A549 (cell line): ENCODE measurements at regions of chr17 and their contacts with region 1.

Region 1: GRCh38 chr17:42422958-42423712 is at the start of gene CAVIN1:
- DNase-seq: peak; percentile 97 to 99
- ATAC-seq: peak; percentile 71 to 86
- H3K4me3 ChIP-seq: peak within 1 kb of the TSS; percentile 93
- H3K27ac ChIP-seq: peak within 1 kb of the TSS; percentile 93 to 95
- H3K4me1 ChIP-seq: peaks cover 45% of the 10 kb centered on the region
- CTCF ChIP-seq: no peak
- EP300 ChIP-seq: no peak
- POLR2A ChIP-seq: peak; percentile 99
- RAD21 ChIP-seq: peak in 1 of 2 experiments; percentile 18; a peak in 1 of 5 replicates
- polyA plus RNA-seq, gene CAVIN1: 91.4 and 101 TPM in 2 replicates

Region 2: DNA sequence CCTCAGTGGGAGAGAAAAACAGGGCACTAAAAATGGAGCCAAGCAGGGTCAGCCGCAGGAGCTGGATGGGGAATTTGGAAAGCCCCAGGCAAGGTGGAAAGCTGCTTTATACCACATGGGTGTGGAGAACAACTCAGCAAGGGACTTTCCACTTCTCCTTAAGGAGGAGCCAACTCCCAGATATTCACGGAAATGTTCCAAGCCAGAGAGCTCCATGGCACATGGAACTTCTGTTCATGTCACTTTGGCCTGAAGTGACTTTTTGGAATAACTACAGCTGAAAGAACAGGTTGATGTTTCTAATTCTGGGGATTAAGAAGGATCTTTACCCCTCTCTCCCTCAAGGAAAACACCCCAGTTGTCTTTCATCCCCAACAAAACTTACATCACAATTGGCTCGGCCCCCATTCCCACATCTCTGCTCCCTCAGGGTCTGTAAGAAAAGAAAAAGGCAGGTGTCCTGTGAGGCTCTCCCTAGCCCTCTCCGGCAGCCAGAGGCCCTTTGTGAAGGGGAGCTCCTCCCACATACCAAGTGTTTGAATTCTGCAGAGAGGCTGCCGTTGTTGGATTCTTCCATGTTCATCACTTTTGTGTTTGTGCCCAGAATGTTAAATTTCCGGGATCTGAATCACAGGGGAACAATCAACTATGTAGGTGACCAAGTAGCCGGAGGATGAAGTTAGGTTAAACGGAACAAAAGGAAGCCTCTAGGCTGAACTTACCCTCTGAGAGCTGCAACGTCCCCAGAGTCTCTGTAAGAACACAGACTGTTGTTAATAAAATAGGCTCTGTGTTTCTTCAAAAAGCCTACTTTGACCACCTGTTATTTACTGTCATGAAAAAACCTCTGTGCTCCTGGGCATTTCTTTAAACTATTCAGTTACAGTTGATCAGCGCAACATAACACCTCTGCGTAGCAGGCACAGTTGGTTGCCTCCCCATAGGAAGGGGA is 93.8 kb before region 1 on chr17:
- CTCF ChIA-PET with region 1: interaction called, 33 read pairs
- POLR2A ChIA-PET with region 1: interaction called, 14 read pairs
- DNase-seq: peak; percentile 95 to 98
- ATAC-seq: peak; percentile 75 to 79
- H3K4me3 ChIP-seq: peak overlapping the region; percentile 9; the same call in 1 of the 3 replicates
- H3K27ac ChIP-seq: peak overlapping the region; percentile 86 to 89
- H3K4me1 ChIP-seq: peaks cover 57% of the 10 kb centered on the region
- CTCF ChIP-seq: no peak
- EP300 ChIP-seq: peak in 1 of 2 experiments; percentile 50; a peak in 2 of 5 replicates
- POLR2A ChIP-seq: no peak
- RAD21 ChIP-seq: peak in 1 of 2 experiments; percentile 14; a peak in 2 of 5 replicates

Region 3: GRCh38 chr17:42388381-42389134 is 34.6 kb before region 1 on chr17 and contains the start of gene STAT3:
- CTCF ChIA-PET with region 1: interaction called, 6 read pairs
- POLR2A ChIA-PET with region 1: interaction called, 27 read pairs
- DNase-seq: peak; percentile 99 to 100
- ATAC-seq: peak; percentile 94 to 98
- H3K4me3 ChIP-seq: peak within 1 kb of the TSS; percentile 88
- H3K27ac ChIP-seq: peak within 1 kb of the TSS; percentile 94 to 96
- H3K4me1 ChIP-seq: peaks cover 28% of the 10 kb centered on the region
- CTCF ChIP-seq: 0 out of 3 replicates have a peak, but pooled peaks have one; percentile 12
- EP300 ChIP-seq: peak; percentile 48 to 80; a peak in 3 of 5 replicates
- POLR2A ChIP-seq: peak; percentile 81
- RAD21 ChIP-seq: peak; percentile 29 to 56; a peak in 3 of 5 replicates
- polyA plus RNA-seq, gene STAT3: 72.8 and 81.9 TPM in 2 replicates

Region 4: GRCh38 chr17:42438600-42439567 is 15.7 kb after region 1 on chr17:
- CTCF ChIA-PET with region 1: interaction called, 13 read pairs
- POLR2A ChIA-PET with region 1: interaction called, 4 read pairs
- DNase-seq: no peak
- ATAC-seq: peak in 1 of 2 experiments; percentile 77; a peak in 3 of 6 replicates
- H3K4me3 ChIP-seq: no peak overlapping the region
- H3K27ac ChIP-seq: no peak overlapping the region
- H3K4me1 ChIP-seq: peaks cover 15% of the 10 kb centered on the region
- CTCF ChIP-seq: peak; percentile 45
- EP300 ChIP-seq: no peak
- POLR2A ChIP-seq: no peak
- RAD21 ChIP-seq: peak; percentile 37 to 55; a peak in 4 of 5 replicates

Region 5: DNA sequence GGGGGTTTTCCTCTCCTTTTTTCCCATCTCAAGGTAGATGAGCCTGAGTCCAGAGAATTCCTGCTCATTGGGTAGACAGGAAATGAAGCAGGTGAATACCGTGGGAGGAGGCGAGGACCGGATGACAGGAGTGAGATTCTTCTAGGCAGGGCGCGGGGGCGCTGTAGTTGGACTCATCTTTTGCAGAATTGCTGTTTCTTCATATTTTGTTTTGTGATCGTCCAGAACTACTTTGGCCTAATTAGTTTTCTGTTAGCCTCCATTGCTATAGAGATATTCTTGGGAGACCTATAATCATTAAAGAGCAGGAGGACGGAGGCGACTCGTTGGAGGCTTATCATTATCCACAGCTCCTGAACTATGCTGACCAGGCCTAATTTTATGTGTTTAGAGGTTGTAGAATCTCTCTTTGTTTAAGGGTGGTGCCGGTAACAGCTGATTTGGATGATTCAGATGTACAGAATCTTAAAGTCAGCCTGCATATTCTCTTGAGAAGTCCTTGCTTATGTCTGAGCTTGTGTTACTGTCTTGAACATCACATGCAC is 36.2 kb after region 1 on chr17:
- CTCF ChIA-PET with region 1: interaction called, 17 read pairs
- POLR2A ChIA-PET with region 1: interaction called, 11 read pairs
- DNase-seq: peak; percentile 68 to 74
- ATAC-seq: peak; percentile 77 to 79
- H3K4me3 ChIP-seq: peak overlapping the region; percentile 83
- H3K27ac ChIP-seq: peak overlapping the region; percentile 84 to 88
- H3K4me1 ChIP-seq: peaks cover 48% of the 10 kb centered on the region
- CTCF ChIP-seq: peak; percentile 79
- EP300 ChIP-seq: no peak
- POLR2A ChIP-seq: no peak
- RAD21 ChIP-seq: 0 out of 5 replicates have a peak, but pooled peaks of 1 of the 2 experiments have one; percentile 22

Region 6: GRCh38 chr17:42536048-42536371 is 112.9 kb after region 1 on chr17 and contains the start of gene NAGLU:
- CTCF ChIA-PET with region 1: interaction called, 6 read pairs
- POLR2A ChIA-PET with region 1: interaction called, 11 read pairs
- DNase-seq: peak; percentile 91 to 100
- ATAC-seq: peak; percentile 88 to 89
- H3K4me3 ChIP-seq: peak within 1 kb of the TSS; percentile 82
- H3K27ac ChIP-seq: peak within 1 kb of the TSS; percentile 93 to 97
- H3K4me1 ChIP-seq: peaks cover 31% of the 10 kb centered on the region
- CTCF ChIP-seq: no peak
- EP300 ChIP-seq: no peak
- POLR2A ChIP-seq: peak; percentile 54
- RAD21 ChIP-seq: no peak
- polyA plus RNA-seq, gene NAGLU: 17.8 and 18.0 TPM in 2 replicates